ENCODE measurements at regions of chr1 and their contacts with region 1.

Region 1: DNA sequence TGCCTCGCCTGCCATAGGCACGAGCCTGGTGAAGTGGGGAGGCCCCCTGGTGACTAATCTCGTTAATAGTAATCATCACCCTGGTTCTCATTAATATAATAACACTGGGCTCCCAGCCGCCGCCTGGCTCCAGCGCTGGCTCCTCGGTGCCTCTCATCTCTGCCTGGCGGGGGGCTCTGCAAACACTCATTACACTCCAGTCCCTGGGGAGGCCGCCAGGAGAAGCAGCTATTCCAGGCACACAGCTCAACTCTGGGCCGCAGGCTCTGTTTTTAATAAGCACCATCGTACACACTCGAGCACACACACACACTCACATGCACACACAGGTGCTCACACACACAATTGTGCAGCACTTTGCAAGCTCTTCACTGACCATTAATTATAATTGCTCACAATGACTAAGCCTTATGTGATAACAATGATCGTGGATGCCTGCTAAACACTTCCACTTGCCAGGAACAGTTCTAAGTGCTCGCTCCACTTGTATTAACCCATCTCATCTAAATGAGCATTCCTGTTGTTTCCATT is 52.2 kb downstream of the SDC3 start:
- DNase-seq: peak; percentile 32
- H3K4me3 Mint-ChIP-seq: no peak overlapping the region
- H3K27ac Mint-ChIP-seq: no peak overlapping the region
- H3K4me1 Mint-ChIP-seq: peaks cover 25% of the 10 kb centered on the region
- H3K27me3 Mint-ChIP-seq: peaks cover 23% of the 10 kb centered on the region
- CTCF ChIP-seq: no peak

Region 2: DNA sequence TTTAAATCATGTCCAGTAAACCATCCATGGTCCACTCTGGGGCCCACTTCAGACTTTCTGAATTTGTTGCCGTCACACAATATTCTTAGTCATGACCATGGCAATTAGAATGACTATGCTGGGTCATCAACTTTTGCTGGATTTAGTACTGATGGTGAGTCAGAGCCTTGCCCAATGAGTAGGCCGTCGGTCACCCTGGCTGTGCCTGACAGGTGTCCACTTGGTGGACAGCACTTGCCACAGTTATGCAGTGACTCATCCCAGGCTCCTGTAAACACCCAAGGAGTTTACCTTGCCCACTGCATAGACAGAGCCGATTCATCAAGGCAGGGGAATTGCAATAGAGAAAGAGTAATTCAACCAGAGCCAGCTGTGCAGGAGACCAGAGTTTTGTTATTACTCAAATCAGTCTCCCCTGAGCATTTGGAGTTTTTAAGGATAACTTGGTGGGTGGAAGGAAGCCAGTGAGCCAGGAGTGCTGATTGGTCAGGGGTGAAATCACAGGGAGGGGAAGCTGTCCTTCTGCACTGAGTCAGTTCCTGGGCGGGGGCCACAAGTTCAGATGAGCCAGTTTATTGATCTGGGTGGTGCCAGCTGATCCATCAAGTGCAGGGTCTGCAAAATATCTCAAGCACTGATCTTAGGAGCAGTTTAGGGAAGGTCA is 1286.2 kb before region 1 on chr1:
- CTCF ChIA-PET with region 1: no interaction called
- intact Hi-C with region 1: no loop called
- DNase-seq: peak; percentile 88
- H3K4me3 Mint-ChIP-seq: peak overlapping the region; percentile 50
- H3K27ac Mint-ChIP-seq: peak overlapping the region; percentile 61
- H3K4me1 Mint-ChIP-seq: peaks cover 20% of the 10 kb centered on the region
- H3K27me3 Mint-ChIP-seq: no peaks in the 10 kb centered on the region
- CTCF ChIP-seq: no peak

Region 3: DNA sequence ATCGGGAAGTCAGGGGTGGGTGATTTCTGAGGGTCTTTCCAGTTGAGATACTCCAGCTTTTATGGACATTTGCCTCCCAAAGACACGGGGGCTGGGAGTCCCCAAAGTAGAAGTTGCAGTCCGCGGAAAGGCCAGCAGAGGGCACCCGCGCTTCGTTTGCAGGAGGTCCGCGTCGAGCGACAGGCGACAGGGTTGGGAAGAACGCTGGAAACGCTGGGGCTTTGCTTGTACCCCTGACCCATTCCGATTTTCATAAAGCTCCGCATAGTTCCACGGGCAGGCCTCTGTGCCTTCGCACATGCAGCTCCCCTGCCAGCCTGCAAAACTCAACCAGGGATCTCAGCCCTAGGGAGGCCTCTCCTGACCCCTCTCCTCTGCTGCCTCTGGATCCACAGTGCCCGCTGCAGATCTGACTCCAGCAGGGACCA is 54.5 kb before region 1 on chr1:
- CTCF ChIA-PET with region 1: no interaction called
- intact Hi-C with region 1: loop called (anchors 5 kb)
- DNase-seq: peak; percentile 87
- H3K4me3 Mint-ChIP-seq: no peak overlapping the region
- H3K27ac Mint-ChIP-seq: no peak overlapping the region
- H3K4me1 Mint-ChIP-seq: peaks cover 19% of the 10 kb centered on the region
- H3K27me3 Mint-ChIP-seq: peaks cover 26% of the 10 kb centered on the region
- CTCF ChIP-seq: peak; percentile 97

Region 4: GRCh38 chr1:31127266-31127665 is 270.9 kb after region 1 on chr1:
- CTCF ChIA-PET with region 1: no interaction called
- intact Hi-C with region 1: no loop called
- DNase-seq: no peak
- H3K4me3 Mint-ChIP-seq: no peak overlapping the region
- H3K27ac Mint-ChIP-seq: no peak overlapping the region
- H3K4me1 Mint-ChIP-seq: no peaks in the 10 kb centered on the region
- H3K27me3 Mint-ChIP-seq: no peaks in the 10 kb centered on the region
- CTCF ChIP-seq: no peak

Measured in Calu3 (cell line).